ENCODE measurements at regions of chr10 and their contacts with region 1.

Region 1: DNA sequence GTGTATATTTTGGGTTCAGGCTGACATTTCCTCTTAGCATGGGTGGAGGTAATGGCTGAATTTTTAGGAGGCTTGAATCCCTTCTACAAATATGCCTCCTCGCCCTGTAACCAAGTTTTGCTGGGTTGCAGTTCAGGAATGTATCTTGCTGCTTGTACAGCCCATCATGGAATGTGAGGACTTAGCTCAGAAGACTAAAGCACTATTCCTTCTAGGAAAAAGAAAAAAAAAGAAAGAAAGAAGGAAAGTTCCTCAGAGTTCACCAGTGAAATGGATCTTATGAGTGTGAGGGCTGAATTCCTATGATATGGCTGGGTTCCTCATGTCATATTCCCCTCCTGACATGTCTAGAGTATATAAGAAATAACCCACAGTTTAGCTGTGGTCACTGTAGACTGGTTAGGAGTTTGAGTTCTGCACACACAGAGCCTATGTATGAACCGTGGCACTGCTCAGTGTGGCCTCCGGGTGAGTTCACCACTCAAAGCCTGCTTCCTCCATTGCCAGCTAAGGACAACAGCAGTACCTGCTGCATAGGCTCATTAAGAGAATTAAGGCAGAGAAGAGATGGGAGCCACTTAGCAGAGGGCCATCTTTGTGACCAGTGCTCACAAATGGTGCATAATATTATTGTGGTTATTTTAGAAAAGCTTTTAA is 114.0 kb downstream of the TACC2 start:
- DNase-seq: no peak
- ATAC-seq: no peak
- H3K4me3 ChIP-seq: no peak overlapping the region; the same call in 1 of the 2 replicates
- H3K27ac ChIP-seq: peak overlapping the region; percentile 98
- H3K4me1 ChIP-seq: peaks cover 14% of the 10 kb centered on the region
- H3K27me3 ChIP-seq: no peaks in the 10 kb centered on the region
- CTCF ChIP-seq: no peak

Region 2: GRCh38 chr10:122062831-122063674 is 39.9 kb before region 1 on chr10:
- CTCF ChIA-PET with region 1: no interaction called
- POLR2A ChIA-PET with region 1: interaction called, 12 read pairs
- intact Hi-C with region 1: loop called (anchors 2 kb)
- DNase-seq: peak; percentile 90
- ATAC-seq: peak; percentile 96
- H3K4me3 ChIP-seq: no peak overlapping the region
- H3K27ac ChIP-seq: peak overlapping the region; percentile 97
- H3K4me1 ChIP-seq: peaks cover 19% of the 10 kb centered on the region
- H3K27me3 ChIP-seq: no peaks in the 10 kb centered on the region
- CTCF ChIP-seq: no peak